CD8-positive, alpha-beta T cell (primary cell): ENCODE measurements at regions of chr7 and their contacts with region 1.

Region 1: GRCh38 chr7:106865130-106866041 is at the start of gene PIK3CG:
- DNase-seq: peak in 6 of 9 experiments; percentile 18 to 84 (median 40)
- ATAC-seq: peak; percentile 92
- H3K4me3 ChIP-seq: peak within 1 kb of the TSS; percentile 69 to 73
- H3K4me3 Mint-ChIP-seq: peak within 1 kb of the TSS; percentile 93
- H3K27ac ChIP-seq: peak within 1 kb of the TSS; percentile 71 to 87
- H3K27ac Mint-ChIP-seq: peak within 1 kb of the TSS; percentile 95
- H3K4me1 ChIP-seq: peaks cover 57% of the 10 kb centered on the region
- H3K4me1 Mint-ChIP-seq: peaks cover 75% of the 10 kb centered on the region
- H3K27me3 ChIP-seq: no peaks in the 10 kb centered on the region
- H3K27me3 Mint-ChIP-seq: no peaks in the 10 kb centered on the region
- CTCF ChIP-seq: no peak
- total RNA-seq, gene PIK3CG: 30.8 to 32.5 TPM

Region 2: GRCh38 chr7:106598663-106599342 is 266.6 kb before region 1 on chr7:
- CTCF ChIA-PET with region 1: no interaction called
- POLR2A ChIA-PET with region 1: no interaction called
- intact Hi-C with region 1: loop called in 1 of 2 experiments (anchors 10 kb)
- DNase-seq: peak; percentile 26 to 87 (median 62)
- ATAC-seq: peak; percentile 99
- H3K4me3 ChIP-seq: peak overlapping the region in 1 of 2 experiments; percentile 26
- H3K4me3 Mint-ChIP-seq: peak overlapping the region; percentile 59
- H3K27ac ChIP-seq: no peak overlapping the region
- H3K27ac Mint-ChIP-seq: no peak overlapping the region
- H3K4me1 ChIP-seq: peaks cover 4% of the 10 kb centered on the region
- H3K4me1 Mint-ChIP-seq: peaks cover 6% of the 10 kb centered on the region
- H3K27me3 ChIP-seq: no peaks in the 10 kb centered on the region
- H3K27me3 Mint-ChIP-seq: no peaks in the 10 kb centered on the region
- CTCF ChIP-seq: no peak

Region 3: GRCh38 chr7:106779877-106780276 is 85.5 kb before region 1 on chr7:
- CTCF ChIA-PET with region 1: no interaction called
- POLR2A ChIA-PET with region 1: no interaction called
- intact Hi-C with region 1: no loop called
- DNase-seq: peak in 1 of 9 experiments; percentile 12
- ATAC-seq: no peak
- H3K4me3 ChIP-seq: no peak overlapping the region
- H3K4me3 Mint-ChIP-seq: no peak overlapping the region
- H3K27ac ChIP-seq: no peak overlapping the region
- H3K27ac Mint-ChIP-seq: no peak overlapping the region
- H3K4me1 ChIP-seq: no peaks in the 10 kb centered on the region
- H3K4me1 Mint-ChIP-seq: no peaks in the 10 kb centered on the region
- H3K27me3 ChIP-seq: no peaks in the 10 kb centered on the region
- H3K27me3 Mint-ChIP-seq: no peaks in the 10 kb centered on the region
- CTCF ChIP-seq: no peak

Region 4: DNA sequence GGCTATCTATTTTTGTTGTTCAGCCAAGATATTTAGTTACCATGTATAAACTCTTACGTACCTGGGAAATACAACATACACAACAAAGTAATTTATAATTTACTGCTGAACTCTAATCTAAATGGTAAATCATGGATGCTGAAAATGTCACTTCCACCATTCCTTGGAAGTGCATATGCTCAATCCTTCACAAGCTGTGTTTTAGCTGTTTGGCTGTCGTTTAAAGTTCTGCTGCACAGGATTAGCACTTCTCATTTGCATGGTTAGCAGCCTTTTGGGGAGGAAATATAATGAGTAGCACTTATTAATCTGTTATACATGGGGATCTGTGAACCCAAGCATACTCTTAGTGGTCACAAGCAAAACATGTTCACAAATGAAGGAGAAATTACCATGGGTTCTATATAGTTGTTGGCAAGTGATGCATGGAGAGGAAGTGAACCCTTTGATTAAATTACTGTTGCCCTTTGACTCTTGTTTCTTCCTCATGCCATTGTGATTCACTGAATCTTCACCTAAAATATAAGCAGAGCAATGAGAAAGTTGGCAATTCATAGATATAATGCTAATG is 18.2 kb after region 1 on chr7:
- CTCF ChIA-PET with region 1: no interaction called
- POLR2A ChIA-PET with region 1: no interaction called
- intact Hi-C with region 1: loop called in 1 of 2 experiments (anchors 2 kb)
- DNase-seq: no peak
- ATAC-seq: no peak
- H3K4me3 ChIP-seq: no peak overlapping the region
- H3K4me3 Mint-ChIP-seq: no peak overlapping the region
- H3K27ac ChIP-seq: no peak overlapping the region
- H3K27ac Mint-ChIP-seq: peak overlapping the region; percentile 58
- H3K4me1 ChIP-seq: peaks cover under 1% of the 10 kb centered on the region
- H3K4me1 Mint-ChIP-seq: peaks cover 35% of the 10 kb centered on the region
- H3K27me3 ChIP-seq: no peaks in the 10 kb centered on the region
- H3K27me3 Mint-ChIP-seq: no peaks in the 10 kb centered on the region
- CTCF ChIP-seq: no peak

Region 5: DNA sequence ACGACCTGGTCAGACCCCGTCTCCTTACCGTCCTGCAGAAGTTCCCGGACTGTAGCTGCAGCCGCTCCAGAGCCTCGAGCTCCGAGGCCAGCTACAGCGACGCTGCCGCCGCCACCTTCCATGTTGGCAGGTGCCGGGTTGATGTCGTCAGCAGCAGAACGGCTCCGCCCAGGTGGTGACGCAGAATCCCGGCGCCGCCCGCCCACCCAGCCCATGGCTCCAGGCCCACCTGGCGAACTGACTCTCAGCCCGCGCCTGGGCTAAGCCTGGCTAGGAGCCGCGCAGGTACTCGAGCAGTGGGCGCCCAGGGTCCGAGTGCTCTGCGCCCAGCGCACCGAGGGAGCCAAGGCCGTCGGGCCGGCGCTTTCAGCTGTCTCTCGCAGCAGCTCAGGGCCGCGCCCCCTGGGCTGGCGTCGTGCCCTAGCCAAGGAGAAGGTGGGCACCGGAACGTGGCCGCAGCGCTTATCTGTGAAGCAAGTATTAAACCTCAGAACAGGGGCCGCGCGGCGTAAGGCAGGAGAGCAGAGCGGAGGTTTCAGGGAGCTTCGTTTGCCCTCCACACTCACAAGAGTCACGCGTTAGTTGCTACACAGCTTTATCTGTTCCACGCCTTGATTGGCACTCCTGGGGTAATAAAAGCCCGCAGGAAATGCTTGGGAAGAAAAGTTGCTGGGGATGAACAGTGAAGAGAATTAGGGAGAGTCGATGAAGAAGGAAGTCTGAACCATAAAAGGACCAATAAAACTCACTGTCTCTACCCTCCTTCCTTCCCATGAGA is 698.6 kb after region 1 on chr7 and contains the starts of genes COG5 and DUS4L:
- CTCF ChIA-PET with region 1: no interaction called
- POLR2A ChIA-PET with region 1: no interaction called
- intact Hi-C with region 1: loop called in 1 of 2 experiments (anchors 10 kb)
- DNase-seq: peak; percentile 73 to 93 (median 86)
- ATAC-seq: peak; percentile 83
- H3K4me3 ChIP-seq: peak within 1 kb of the TSS; percentile 91 to 97
- H3K4me3 Mint-ChIP-seq: peak within 1 kb of the TSS; percentile 80
- H3K27ac ChIP-seq: peak within 1 kb of the TSS; percentile 95 to 96
- H3K27ac Mint-ChIP-seq: peak within 1 kb of the TSS; percentile 89
- H3K4me1 ChIP-seq: peaks cover 46% of the 10 kb centered on the region
- H3K4me1 Mint-ChIP-seq: peaks cover 65% of the 10 kb centered on the region
- H3K27me3 ChIP-seq: no peaks in the 10 kb centered on the region
- H3K27me3 Mint-ChIP-seq: no peaks in the 10 kb centered on the region
- CTCF ChIP-seq: no peak
- total RNA-seq, gene COG5: 45.7 to 46.8 TPM
- total RNA-seq, gene DUS4L: 13.1 to 16.4 TPM

Region 6: GRCh38 chr7:107743567-107744344 is 878.4 kb after region 1 on chr7 and contains the start of gene CBLL1:
- CTCF ChIA-PET with region 1: no interaction called
- POLR2A ChIA-PET with region 1: no interaction called
- intact Hi-C with region 1: loop called (anchors 5 kb)
- DNase-seq: peak; percentile 96 to 99 (median 98)
- ATAC-seq: peak; percentile 91
- H3K4me3 ChIP-seq: peak within 1 kb of the TSS; percentile 90 to 99
- H3K4me3 Mint-ChIP-seq: peak within 1 kb of the TSS; percentile 92
- H3K27ac ChIP-seq: peak within 1 kb of the TSS; percentile 99
- H3K27ac Mint-ChIP-seq: peak within 1 kb of the TSS; percentile 100
- H3K4me1 ChIP-seq: peaks cover 46% of the 10 kb centered on the region
- H3K4me1 Mint-ChIP-seq: peaks cover 59% of the 10 kb centered on the region
- H3K27me3 ChIP-seq: no peaks in the 10 kb centered on the region
- H3K27me3 Mint-ChIP-seq: no peaks in the 10 kb centered on the region
- CTCF ChIP-seq: peak; percentile 68
- total RNA-seq, gene CBLL1: 68.5 to 71.6 TPM